GM12878 (cell line): ENCODE measurements at regions of chr10 and their contacts with region 1.

Region 1: DNA sequence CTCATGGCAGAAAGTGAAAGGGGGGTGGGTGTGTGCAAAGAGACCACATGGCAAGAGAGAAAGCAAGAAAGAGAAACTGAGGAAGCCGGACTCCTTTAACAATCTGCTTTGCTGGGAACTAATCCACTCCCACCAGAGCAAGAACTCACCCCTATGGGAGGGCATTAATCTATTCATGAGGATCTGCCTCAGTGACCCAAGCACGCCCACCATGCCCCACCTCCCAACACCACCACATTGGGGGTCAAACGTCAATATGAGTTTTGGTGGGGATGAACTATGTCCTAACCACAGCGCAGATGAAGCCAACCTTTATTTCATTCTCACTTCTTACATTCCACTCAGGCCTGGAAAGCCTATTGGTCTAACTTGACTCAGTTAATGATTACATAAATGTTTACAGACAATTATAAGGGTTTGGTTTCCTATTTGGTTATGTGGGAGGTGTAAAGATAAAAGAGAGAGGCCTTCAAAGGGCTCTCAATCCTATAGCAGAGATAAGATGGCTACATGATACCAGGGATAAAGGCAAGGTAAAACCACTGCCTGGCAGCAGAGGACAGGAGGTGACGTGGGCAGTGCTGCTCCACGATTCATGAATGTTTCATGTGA is 601.8 kb downstream of the PARD3 start:
- DNase-seq: no peak
- ATAC-seq: peak; percentile 67
- H3K4me3 ChIP-seq: no peak overlapping the region
- H3K27ac ChIP-seq: no peak overlapping the region
- H3K4me1 ChIP-seq: no peaks in the 10 kb centered on the region
- H3K27me3 ChIP-seq: no peaks in the 10 kb centered on the region
- CTCF ChIP-seq: no peak
- EP300 ChIP-seq: no peak
- POLR2A ChIP-seq: no peak
- RAD21 ChIP-seq: no peak

Region 2: GRCh38 chr10:34262985-34263384 is 49.7 kb after region 1 on chr10:
- CTCF ChIA-PET with region 1: no interaction called
- POLR2A ChIA-PET with region 1: no interaction called
- RAD21 ChIA-PET with region 1: no interaction called
- SMC1A ChIA-PET with region 1: no interaction called
- in situ Hi-C with region 1: no loop called
- intact Hi-C with region 1: loop called (anchors 5 kb)
- DNase-seq: no peak
- ATAC-seq: no peak
- H3K4me3 ChIP-seq: no peak overlapping the region
- H3K27ac ChIP-seq: no peak overlapping the region
- H3K4me1 ChIP-seq: no peaks in the 10 kb centered on the region
- H3K27me3 ChIP-seq: no peaks in the 10 kb centered on the region
- CTCF ChIP-seq: no peak
- EP300 ChIP-seq: no peak
- POLR2A ChIP-seq: no peak
- RAD21 ChIP-seq: no peak